ENCODE measurements at regions of chr11 and their contacts with region 1.

Region 1: DNA sequence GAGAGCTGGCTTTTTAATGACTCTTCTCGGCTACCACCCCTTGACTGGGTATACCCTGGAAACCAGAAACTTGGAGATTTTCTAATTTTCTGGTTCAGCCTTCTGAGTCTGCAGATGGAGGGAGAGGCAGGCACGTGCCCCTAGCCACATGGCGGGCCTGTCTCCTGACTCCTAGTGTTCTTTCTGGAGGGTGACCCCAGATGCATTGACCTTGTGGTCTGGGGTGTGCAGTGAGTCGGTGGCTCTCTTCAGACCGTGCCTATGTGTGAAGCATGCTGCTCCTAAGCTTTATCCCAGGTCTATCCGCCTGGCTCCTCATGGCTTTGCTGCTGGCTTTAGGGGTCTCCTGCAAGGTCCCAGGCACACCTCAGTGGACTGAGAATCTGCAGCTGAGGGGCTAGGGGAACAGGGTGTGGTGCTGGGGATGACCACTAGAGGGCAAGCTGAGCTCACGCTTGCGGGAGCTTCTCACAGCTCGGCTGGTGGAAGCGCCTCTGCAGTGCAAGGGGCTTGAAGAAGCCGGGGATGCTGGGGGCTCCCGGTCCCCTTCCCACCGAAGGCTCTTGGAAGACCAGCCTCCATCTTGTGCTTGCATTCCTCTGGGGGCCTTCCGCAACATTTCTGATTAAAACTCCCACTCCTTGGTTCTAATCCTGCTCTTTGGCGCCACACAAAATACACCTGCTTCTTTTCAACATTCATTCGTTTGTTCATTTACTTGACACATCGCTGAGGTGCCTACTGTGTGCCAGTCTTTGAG is 51.8 kb downstream of the OTOG start:
- DNase-seq: peak; percentile 85
- H3K4me3 ChIP-seq: no peak overlapping the region; a peak in 1 of 4 replicates
- H3K27ac ChIP-seq: no peak overlapping the region
- H3K4me1 ChIP-seq: no peaks in the 10 kb centered on the region; a peak in 1 of 4 replicates
- H3K27me3 ChIP-seq: no peaks in the 10 kb centered on the region
- CTCF ChIP-seq: peak; percentile 87
- EP300 ChIP-seq: no peak
- RAD21 ChIP-seq: peak; percentile 96

Region 2: DNA sequence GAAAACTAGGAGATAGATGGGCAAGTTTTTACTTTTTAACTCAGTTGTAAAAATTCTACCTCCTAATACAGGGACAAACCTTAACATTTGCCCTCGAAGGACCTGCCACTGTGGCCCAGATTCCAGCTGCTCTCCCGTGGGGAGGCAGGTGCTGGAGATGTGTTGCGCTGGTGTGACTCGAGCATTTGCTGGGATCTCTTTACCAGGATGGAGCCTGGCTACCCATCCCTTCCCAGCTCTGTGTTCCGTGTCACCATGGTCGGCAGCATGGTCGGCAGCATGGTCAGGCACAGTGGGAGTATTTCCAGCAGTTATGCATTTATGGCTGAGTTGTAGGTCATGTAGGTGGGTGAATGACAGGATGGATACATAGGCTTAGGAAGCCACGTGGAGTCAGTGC is 10.7 kb before region 1 on chr11:
- CTCF ChIA-PET with region 1: interaction called, 14 read pairs
- POLR2A ChIA-PET with region 1: no interaction called
- DNase-seq: no peak
- H3K4me3 ChIP-seq: no peak overlapping the region
- H3K27ac ChIP-seq: no peak overlapping the region
- H3K4me1 ChIP-seq: no peaks in the 10 kb centered on the region
- H3K27me3 ChIP-seq: no peaks in the 10 kb centered on the region
- CTCF ChIP-seq: no peak
- EP300 ChIP-seq: no peak
- RAD21 ChIP-seq: no peak

Region 3: GRCh38 chr11:17610085-17610894 is 11.4 kb after region 1 on chr11:
- CTCF ChIA-PET with region 1: interaction called, 15 read pairs
- POLR2A ChIA-PET with region 1: no interaction called
- DNase-seq: no peak
- H3K4me3 ChIP-seq: no peak overlapping the region
- H3K27ac ChIP-seq: no peak overlapping the region
- H3K4me1 ChIP-seq: peaks cover 0 to 9% of the 10 kb centered on the region in 2 experiments; a peak in 1 of 4 replicates
- H3K27me3 ChIP-seq: no peaks in the 10 kb centered on the region
- CTCF ChIP-seq: no peak
- EP300 ChIP-seq: no peak
- RAD21 ChIP-seq: no peak

Region 4: DNA sequence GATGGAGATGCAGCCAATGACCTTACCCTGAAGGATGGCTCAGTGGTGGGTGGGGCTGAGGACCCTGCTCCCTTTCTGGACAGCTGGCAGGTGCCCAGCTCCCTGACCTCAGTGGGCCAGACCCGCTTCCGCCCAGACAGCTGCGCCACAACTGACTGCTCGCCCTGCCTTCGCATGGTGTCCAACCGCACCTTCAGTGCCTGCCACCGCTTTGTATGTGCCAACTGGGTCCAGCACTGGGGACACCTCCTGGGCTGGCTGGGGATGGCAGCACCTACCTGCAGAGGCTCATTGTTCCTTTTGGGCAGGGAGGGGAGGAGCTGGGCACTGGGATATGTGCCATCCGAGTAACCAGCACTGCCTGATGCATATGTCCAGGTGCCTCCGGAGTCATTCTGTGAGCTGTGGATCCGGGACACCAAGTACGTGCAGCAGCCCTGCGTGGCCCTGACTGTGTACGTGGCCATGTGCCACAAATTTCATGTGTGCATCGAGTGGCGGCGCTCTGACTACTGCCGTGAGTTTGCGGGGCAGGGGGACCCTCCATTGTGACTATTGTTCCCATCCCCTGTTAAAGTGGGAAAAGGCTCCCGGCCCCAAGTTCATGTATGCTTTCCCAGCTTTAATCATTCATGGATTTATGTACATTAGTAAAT is 33.0 kb after region 1 on chr11:
- CTCF ChIA-PET with region 1: interaction called, 17 read pairs
- POLR2A ChIA-PET with region 1: no interaction called
- DNase-seq: peak; percentile 12
- H3K4me3 ChIP-seq: no peak overlapping the region
- H3K27ac ChIP-seq: no peak overlapping the region
- H3K4me1 ChIP-seq: no peaks in the 10 kb centered on the region
- H3K27me3 ChIP-seq: no peaks in the 10 kb centered on the region
- CTCF ChIP-seq: no peak
- EP300 ChIP-seq: no peak
- RAD21 ChIP-seq: no peak

Region 5: DNA sequence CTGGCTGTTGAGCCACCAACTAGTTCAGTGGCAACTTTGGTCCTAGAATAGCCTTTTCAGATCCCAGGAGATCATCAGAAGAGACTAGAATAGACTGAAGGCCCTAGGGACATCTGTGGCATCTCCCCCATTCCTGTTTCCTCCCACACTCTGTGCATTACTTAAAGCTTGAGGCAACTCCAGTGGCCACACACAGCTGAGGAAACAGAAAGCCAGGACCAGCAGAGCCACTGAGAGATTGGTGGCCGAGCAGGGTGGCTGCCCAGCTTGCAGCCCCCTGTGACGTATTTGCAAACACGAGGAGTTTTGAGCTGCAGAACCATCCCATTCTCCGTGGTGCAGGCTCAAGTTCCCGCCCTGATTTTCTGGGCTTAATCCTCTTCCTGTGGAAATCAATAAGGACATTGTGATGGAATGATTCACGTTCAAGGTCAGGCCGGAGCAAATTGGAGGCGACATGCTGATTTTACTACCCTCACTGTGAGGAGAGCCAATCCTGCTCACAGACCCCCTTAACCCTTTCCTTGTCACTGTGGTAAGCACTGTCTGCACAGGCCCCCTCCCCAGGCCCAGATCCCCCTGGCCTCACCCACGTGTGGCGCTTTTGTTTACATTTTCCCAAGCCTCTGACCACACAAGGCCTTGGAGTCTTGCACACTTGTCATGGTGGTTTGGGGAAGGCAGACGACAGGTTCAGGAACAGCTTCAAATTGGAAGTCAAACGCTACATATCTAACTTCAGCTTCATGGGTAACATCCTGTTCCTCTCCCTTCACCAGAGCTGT is 51.4 kb after region 1 on chr11:
- CTCF ChIA-PET with region 1: interaction called, 11 read pairs
- POLR2A ChIA-PET with region 1: no interaction called
- DNase-seq: no peak
- H3K4me3 ChIP-seq: no peak overlapping the region
- H3K27ac ChIP-seq: no peak overlapping the region
- H3K4me1 ChIP-seq: no peaks in the 10 kb centered on the region
- H3K27me3 ChIP-seq: no peaks in the 10 kb centered on the region
- CTCF ChIP-seq: no peak
- EP300 ChIP-seq: no peak
- RAD21 ChIP-seq: no peak

Region 6: GRCh38 chr11:17722000-17722643 is 123.2 kb after region 1 on chr11:
- CTCF ChIA-PET with region 1: interaction called, 38 read pairs
- POLR2A ChIA-PET with region 1: no interaction called
- DNase-seq: peak; percentile 70
- H3K4me3 ChIP-seq: no peak overlapping the region
- H3K27ac ChIP-seq: no peak overlapping the region
- H3K4me1 ChIP-seq: peaks cover 0 to 6% of the 10 kb centered on the region in 2 experiments; a peak in 1 of 4 replicates
- H3K27me3 ChIP-seq: peaks cover 54% of the 10 kb centered on the region
- CTCF ChIP-seq: peak; percentile 46; the same call in 1 of the 2 replicates
- EP300 ChIP-seq: no peak
- RAD21 ChIP-seq: peak; percentile 43